Activated CD4-positive, alpha-beta T cell treated with anti-CD3 and anti-CD28 coated beads for 36 hours (primary cell): ENCODE measurements at regions of chr17 and their contacts with region 1.

Region 1: DNA sequence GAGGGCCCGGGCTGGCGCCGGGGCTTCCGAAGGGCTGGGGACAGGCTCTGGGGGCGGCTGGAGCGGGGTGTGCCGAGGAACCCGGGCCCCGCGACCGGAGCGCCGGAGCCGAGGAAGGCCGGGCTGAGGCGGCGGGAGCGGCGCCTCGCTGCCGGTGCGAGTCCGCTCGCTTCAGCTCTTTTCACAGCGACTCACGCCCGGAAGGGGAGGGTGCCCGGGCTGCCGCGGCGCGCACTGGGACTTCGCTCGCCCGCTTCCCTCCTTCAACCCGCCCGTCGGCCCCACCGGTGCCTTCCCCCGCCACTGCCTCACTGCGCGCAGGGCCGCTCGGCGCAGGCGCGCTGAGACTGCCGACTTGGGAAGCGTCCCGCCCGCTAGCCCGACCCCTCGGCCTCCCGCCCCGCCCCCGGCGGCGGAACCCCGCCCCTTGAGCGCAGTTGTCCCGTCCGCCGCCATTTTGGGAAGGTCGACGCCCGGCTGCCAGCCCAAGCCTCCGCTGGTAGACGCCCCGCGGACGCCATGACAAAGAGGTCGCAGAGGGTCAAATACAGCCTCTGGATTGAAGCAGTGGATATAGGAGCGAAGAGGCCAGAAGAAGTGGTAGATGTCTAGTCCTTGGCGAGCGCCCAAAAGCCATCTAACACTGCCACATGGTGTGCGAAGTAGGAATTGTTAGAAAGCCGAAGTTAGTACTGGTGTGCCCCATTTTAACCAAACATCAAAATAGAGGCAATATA is at the start of gene UBE2G1:
- DNase-seq: peak; percentile 99
- ATAC-seq: peak; percentile 86
- H3K4me3 Mint-ChIP-seq: peak within 1 kb of the TSS; percentile 65
- H3K27ac Mint-ChIP-seq: peak within 1 kb of the TSS; percentile 90
- H3K4me1 Mint-ChIP-seq: peaks cover 29% of the 10 kb centered on the region
- H3K27me3 Mint-ChIP-seq: no peaks in the 10 kb centered on the region
- total RNA-seq, gene UBE2G1: 51.0 to 52.9 TPM

Region 2: GRCh38 chr17:3723556-3724369 is 642.7 kb before region 1 on chr17 and contains the start of gene HASPIN:
- CTCF ChIA-PET with region 1: no interaction called
- POLR2A ChIA-PET with region 1: no interaction called
- intact Hi-C with region 1: loop called in 1 of 2 experiments (anchors 10 kb)
- DNase-seq: peak; percentile 96
- ATAC-seq: peak; percentile 86
- H3K4me3 Mint-ChIP-seq: peak within 1 kb of the TSS; percentile 83
- H3K27ac Mint-ChIP-seq: peak within 1 kb of the TSS; percentile 93
- H3K4me1 Mint-ChIP-seq: peaks cover 58% of the 10 kb centered on the region
- H3K27me3 Mint-ChIP-seq: no peaks in the 10 kb centered on the region
- total RNA-seq, gene HASPIN: 21.0 to 25.2 TPM

Region 3: DNA sequence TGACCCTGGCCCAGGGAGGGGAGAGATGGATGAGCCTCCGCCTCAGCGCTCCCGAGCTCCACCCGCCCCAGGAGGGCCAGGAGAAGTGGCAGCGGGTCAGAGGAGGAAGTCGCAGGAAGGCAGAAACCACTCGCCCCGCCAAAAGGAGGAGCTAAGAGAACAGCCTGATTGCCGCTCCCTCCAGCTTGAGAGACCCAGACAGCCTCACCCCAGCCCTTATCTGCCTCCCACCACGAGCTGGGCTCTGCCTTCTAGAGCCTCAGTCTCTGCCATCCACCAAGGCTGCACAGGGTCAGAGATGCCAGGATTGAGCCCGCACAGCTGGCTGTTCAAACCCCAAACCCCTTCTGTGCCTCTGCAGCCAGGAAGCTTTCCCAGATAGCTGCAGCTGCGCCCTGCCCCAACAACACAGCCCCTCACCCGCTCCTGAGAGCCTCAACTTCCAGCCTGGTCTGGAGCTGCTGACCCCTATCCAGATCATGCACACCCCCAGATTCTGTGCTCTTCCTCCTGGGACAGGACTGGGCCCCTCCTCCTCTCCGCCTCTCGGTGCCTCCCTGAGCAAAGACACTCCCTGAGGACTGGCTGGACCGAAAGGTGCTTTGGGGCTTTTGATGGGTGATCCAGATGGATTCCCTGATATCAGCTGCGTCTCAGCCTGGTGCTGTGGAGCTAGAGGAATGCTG is 401.2 kb before region 1 on chr17:
- CTCF ChIA-PET with region 1: no interaction called
- POLR2A ChIA-PET with region 1: no interaction called
- intact Hi-C with region 1: loop called in 1 of 2 experiments (anchors 2 kb)
- DNase-seq: peak; percentile 86
- ATAC-seq: peak; percentile 75
- H3K4me3 Mint-ChIP-seq: peak overlapping the region; percentile 81
- H3K27ac Mint-ChIP-seq: peak overlapping the region; percentile 93
- H3K4me1 Mint-ChIP-seq: peaks cover 40% of the 10 kb centered on the region
- H3K27me3 Mint-ChIP-seq: no peaks in the 10 kb centered on the region

Region 4: DNA sequence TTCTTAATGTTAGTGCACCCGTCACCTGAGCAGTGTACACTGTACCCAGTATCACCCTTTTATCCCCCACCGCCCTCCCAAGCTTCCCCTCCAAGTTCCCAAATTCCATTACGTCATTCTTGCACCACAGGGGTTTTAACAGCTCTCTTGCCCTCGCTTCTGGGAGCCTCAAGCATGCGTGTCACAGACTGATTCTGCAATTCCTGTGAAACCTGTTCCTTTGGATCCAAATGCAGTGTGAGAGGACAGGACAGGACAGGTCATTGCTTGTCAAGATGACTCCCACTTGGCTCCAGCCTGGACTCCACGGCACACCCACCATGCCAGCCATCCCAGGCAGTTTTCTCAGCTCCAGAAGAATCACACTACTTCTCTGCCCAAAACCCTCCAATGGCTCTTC is 179.4 kb before region 1 on chr17:
- CTCF ChIA-PET with region 1: no interaction called
- POLR2A ChIA-PET with region 1: no interaction called
- intact Hi-C with region 1: no loop called
- DNase-seq: no peak
- ATAC-seq: no peak
- H3K4me3 Mint-ChIP-seq: no peak overlapping the region
- H3K27ac Mint-ChIP-seq: no peak overlapping the region
- H3K4me1 Mint-ChIP-seq: peaks cover 8% of the 10 kb centered on the region
- H3K27me3 Mint-ChIP-seq: no peaks in the 10 kb centered on the region

Region 5: GRCh38 chr17:4412933-4413831 is 46.7 kb after region 1 on chr17:
- CTCF ChIA-PET with region 1: no interaction called
- POLR2A ChIA-PET with region 1: no interaction called
- intact Hi-C with region 1: loop called in 1 of 2 experiments (anchors 2 kb)
- DNase-seq: peak; percentile 96
- ATAC-seq: peak; percentile 99
- H3K4me3 Mint-ChIP-seq: peak overlapping the region; percentile 23
- H3K27ac Mint-ChIP-seq: peak overlapping the region; percentile 42
- H3K4me1 Mint-ChIP-seq: peaks cover 5% of the 10 kb centered on the region
- H3K27me3 Mint-ChIP-seq: no peaks in the 10 kb centered on the region

Region 6: DNA sequence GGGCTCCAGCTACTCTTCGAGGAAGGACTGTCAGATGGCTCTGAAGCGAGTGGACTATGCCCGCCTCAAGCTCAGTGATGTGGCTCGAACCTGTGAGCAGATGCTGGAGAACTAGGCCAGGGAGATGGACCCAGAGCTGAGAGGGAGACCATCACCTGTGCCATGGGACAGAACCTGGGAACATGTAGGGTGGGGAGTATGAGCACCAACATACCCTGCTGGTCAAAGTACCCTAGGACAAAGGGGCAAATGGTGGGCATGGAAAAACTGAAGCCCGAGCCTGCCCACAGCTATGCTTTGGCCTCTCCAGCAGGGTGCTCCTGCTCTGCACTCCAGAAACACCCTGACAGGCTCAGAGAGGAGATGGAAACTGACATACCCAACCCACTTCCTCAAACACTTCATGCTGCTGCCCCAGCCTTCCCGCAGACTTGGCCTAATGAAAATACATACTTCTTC is 366.6 kb after region 1 on chr17:
- CTCF ChIA-PET with region 1: no interaction called
- POLR2A ChIA-PET with region 1: no interaction called
- intact Hi-C with region 1: loop called in 1 of 2 experiments (anchors 1 kb)
- DNase-seq: no peak
- ATAC-seq: no peak
- H3K4me3 Mint-ChIP-seq: no peak overlapping the region
- H3K27ac Mint-ChIP-seq: peak overlapping the region; percentile 17
- H3K4me1 Mint-ChIP-seq: peaks cover 39% of the 10 kb centered on the region
- H3K27me3 Mint-ChIP-seq: peaks cover under 1% of the 10 kb centered on the region

Region 7: DNA sequence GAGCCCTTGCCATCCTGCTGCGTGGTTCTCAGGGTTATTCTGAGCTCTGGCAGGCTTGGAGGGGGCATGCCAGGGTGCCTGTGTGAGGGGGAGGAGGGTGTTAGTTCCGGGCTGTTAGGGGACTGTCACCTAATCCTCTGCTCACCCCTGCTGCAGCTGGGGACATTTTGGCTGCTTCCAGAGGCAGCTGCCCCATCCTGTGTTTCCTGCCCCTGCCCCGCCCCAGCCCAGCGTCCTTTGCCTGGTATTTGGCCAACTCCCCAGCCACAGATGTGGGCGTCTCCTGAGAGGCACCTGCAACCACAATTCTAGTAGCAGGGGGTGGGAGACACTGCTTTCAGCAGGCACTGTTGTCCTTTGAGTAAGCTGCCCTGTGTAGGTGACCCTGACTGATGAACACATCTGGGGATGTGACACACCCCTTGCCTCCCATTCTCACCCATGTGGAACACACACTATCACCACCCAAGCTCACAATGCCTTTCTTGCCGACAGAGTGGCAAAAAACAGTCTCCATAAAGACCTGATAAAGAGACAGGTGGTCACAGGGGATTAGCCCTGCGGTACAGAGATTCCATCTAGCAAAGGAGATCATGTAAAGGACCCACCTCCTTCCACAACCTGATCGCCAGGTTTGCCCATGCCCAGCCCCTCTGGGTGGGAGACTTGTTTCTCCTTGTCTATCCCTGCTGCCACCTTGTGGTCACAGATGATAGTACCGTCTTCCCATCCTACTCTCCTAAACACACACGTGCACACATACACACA is 536.7 kb after region 1 on chr17 and contains the start of gene CHRNE:
- CTCF ChIA-PET with region 1: no interaction called
- POLR2A ChIA-PET with region 1: no interaction called
- intact Hi-C with region 1: loop called in 1 of 2 experiments (anchors 1 kb)
- DNase-seq: peak; percentile 89
- ATAC-seq: peak; percentile 44
- H3K4me3 Mint-ChIP-seq: peak within 1 kb of the TSS; percentile 65
- H3K27ac Mint-ChIP-seq: peak within 1 kb of the TSS; percentile 72
- H3K4me1 Mint-ChIP-seq: peaks cover 26% of the 10 kb centered on the region
- H3K27me3 Mint-ChIP-seq: no peaks in the 10 kb centered on the region
- total RNA-seq, gene CHRNE: 0.59 to 0.84 TPM